Calu3 (cell line): ENCODE measurements at regions of chr19 and their contacts with region 1.

Region 1: GRCh38 chr19:11035441-11036377 is 53.6 kb upstream of the LDLR start:
- DNase-seq: peak; percentile 89
- H3K4me3 Mint-ChIP-seq: no peak overlapping the region
- H3K27ac Mint-ChIP-seq: no peak overlapping the region
- H3K4me1 Mint-ChIP-seq: peaks cover under 1% of the 10 kb centered on the region
- H3K27me3 Mint-ChIP-seq: no peaks in the 10 kb centered on the region
- CTCF ChIP-seq: peak; percentile 77

Region 2: GRCh38 chr19:11007962-11008532 is 27.7 kb before region 1 on chr19:
- CTCF ChIA-PET with region 1: interaction called, 11 read pairs
- intact Hi-C with region 1: no loop called
- DNase-seq: no peak
- H3K4me3 Mint-ChIP-seq: no peak overlapping the region
- H3K27ac Mint-ChIP-seq: no peak overlapping the region
- H3K4me1 Mint-ChIP-seq: no peaks in the 10 kb centered on the region
- H3K27me3 Mint-ChIP-seq: no peaks in the 10 kb centered on the region
- CTCF ChIP-seq: no peak

Region 3: GRCh38 chr19:11090054-11090900 is 54.6 kb after region 1 on chr19:
- CTCF ChIA-PET with region 1: interaction called, 11 read pairs
- intact Hi-C with region 1: no loop called
- DNase-seq: peak; percentile 95
- H3K4me3 Mint-ChIP-seq: peak overlapping the region; percentile 84
- H3K27ac Mint-ChIP-seq: peak overlapping the region; percentile 91
- H3K4me1 Mint-ChIP-seq: no peaks in the 10 kb centered on the region
- H3K27me3 Mint-ChIP-seq: no peaks in the 10 kb centered on the region
- CTCF ChIP-seq: no peak

Region 4: GRCh38 chr19:11137542-11138384 is 102.1 kb after region 1 on chr19:
- CTCF ChIA-PET with region 1: interaction called, 4 read pairs
- intact Hi-C with region 1: loop called (anchors 10 kb)
- DNase-seq: peak; percentile 78
- H3K4me3 Mint-ChIP-seq: peak overlapping the region; percentile 44
- H3K27ac Mint-ChIP-seq: peak overlapping the region; percentile 39
- H3K4me1 Mint-ChIP-seq: peaks cover 12% of the 10 kb centered on the region
- H3K27me3 Mint-ChIP-seq: no peaks in the 10 kb centered on the region
- CTCF ChIP-seq: no peak

Region 5: DNA sequence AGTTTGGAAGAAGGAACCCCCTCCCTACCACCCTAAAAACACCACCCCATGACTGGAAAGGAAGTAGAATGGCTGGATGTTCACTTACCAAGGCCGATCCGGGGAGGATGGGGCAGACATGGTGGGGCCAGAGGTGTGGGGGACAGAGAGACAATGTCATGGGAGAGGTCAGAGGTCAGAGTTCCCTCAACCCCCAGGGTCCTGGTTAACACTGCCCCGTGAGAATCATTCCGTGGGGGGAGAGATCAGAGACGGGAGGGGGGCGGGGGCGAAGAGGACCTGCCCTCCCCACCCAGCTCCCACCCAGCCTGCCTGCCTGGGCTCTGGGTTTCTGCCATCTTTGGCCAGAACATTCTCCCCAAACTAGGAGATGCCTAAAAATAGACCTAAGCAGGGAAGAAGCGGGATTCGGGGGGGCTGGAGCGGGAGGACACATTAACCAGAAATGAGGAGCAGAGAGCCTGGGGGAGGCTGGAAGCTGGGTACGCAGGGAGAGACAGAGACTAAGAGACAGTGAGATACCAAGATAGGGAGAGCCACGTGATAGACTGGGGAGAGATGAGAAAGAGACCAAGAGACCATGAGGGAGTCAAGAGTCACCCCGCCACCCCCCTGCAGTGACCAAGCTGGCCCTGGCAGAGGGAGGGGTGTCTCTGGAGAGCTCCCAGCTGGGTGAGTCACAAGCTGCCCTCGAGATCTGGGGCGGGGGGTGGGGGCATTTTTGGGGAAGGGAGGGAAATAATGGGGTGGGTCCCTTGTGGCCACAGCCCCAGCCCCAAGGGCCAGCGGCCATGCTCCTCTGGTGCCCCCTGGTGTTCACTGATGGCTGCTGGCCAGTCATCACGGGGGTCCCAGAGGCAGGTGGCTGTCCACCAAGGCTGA is 167.7 kb after region 1 on chr19:
- CTCF ChIA-PET with region 1: no interaction called
- intact Hi-C with region 1: loop called (anchors 10 kb)
- DNase-seq: peak; percentile 69
- H3K4me3 Mint-ChIP-seq: no peak overlapping the region
- H3K27ac Mint-ChIP-seq: peak overlapping the region; percentile 50
- H3K4me1 Mint-ChIP-seq: peaks cover 20% of the 10 kb centered on the region
- H3K27me3 Mint-ChIP-seq: no peaks in the 10 kb centered on the region
- CTCF ChIP-seq: peak; percentile 81